SK-N-SH (cell line): ENCODE measurements at regions of chr1 and their contacts with region 1.

Region 1: GRCh38 chr1:145845514-145846161 is at the start of gene NUDT17:
- DNase-seq: peak; percentile 90
- H3K4me3 ChIP-seq: peak within 1 kb of the TSS; percentile 60 to 68
- H3K27ac ChIP-seq: peak within 1 kb of the TSS; percentile 49 to 73; a peak in 3 of 4 replicates
- H3K4me1 ChIP-seq: peaks cover 3 to 14% of the 10 kb centered on the region in 2 experiments; a peak in 2 of 4 replicates
- H3K27me3 ChIP-seq: no peaks in the 10 kb centered on the region
- CTCF ChIP-seq: peak; percentile 97
- EP300 ChIP-seq: 0 out of 4 replicates have a peak, but pooled peaks of 1 of the 2 experiments have one; percentile 26
- RAD21 ChIP-seq: peak; percentile 56
- polyA plus RNA-seq, gene NUDT17: 7.8 and 8.1 TPM in 2 replicates

Region 2: DNA sequence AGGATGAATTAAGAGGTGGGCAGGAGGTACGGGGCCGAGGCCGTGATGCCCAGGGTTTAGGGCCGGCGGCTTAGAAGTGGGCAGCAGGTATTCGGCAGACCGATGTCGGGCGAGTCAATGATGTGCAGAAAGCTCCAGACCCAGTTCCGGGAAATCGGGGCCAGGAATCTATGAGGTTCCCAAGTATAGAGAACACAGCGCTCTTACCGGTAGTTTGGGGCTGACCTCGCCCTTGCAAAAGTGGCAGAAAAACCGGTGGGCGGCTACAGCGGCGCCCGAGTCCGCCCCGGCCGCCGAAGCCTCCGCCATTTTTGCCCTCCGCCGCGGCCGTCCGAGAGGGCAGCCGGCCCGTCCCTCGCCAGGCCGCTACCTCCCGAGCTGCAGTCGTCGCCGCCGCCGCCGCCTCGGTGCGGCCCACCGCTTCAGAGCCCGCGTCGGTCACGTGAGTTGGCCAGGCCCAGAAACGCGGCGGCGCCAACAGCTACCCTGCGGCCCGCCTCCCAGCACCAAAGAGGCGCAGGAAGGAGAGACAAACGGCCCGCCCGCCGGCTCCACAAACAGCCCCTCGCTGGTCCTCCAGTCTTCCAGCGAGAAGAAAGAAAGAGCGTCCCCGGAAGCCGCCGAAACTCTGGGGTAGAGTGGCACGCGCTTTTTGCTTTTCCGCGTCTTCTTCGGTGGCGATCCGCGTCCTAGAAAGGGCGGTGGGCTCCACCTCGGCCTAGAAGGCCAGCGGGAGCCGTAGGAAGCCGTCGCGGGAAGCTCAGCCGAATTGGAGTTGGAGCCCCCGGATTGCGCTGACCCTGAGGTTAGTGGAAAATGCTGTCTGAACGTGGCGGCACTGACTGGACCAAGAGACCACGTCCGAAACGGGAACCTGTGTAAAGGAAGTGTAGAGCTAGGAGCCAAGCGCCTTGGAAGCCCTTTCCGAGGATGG is 21.8 kb before region 1 on chr1 and contains the starts of genes POLR3C and RNF115:
- CTCF ChIA-PET with region 1: interaction called, 121 read pairs
- POLR2A ChIA-PET with region 1: interaction called, 3 read pairs
- DNase-seq: peak; percentile 91
- H3K4me3 ChIP-seq: peak within 1 kb of the TSS; percentile 90 to 99
- H3K27ac ChIP-seq: peak within 1 kb of the TSS; percentile 92 to 98
- H3K4me1 ChIP-seq: peaks cover 0 to 12% of the 10 kb centered on the region in 2 experiments; a peak in 2 of 4 replicates
- H3K27me3 ChIP-seq: no peaks in the 10 kb centered on the region
- CTCF ChIP-seq: no peak
- EP300 ChIP-seq: peak; percentile 24 to 34; a peak in 2 of 4 replicates
- RAD21 ChIP-seq: no peak
- polyA plus RNA-seq, gene POLR3C: 34.1 and 40.9 TPM in 2 replicates
- polyA plus RNA-seq, gene RNF115: 4.8 and 6.1 TPM in 2 replicates

Region 3: DNA sequence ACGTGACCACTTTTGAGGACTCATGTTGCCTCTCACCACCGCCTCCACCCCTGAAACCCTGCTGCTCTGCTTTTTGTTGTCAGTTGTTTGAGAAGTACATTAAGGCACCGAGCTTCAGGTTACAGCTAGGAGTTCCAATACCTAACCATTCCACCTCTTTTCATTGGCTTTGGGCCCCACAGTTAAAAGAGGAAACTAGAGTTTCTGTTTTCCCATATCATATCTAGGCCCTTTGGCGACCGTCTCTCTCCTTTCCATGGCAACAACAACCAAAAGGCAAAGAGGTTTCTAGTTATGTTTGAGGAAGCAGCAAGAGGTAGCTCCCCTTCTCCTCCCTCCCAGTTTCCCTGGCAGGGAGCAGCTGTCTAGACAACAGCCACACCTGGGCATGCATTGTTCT is 34.1 kb after region 1 on chr1:
- CTCF ChIA-PET with region 1: interaction called, 37 read pairs
- POLR2A ChIA-PET with region 1: no interaction called
- DNase-seq: no peak
- H3K4me3 ChIP-seq: no peak overlapping the region
- H3K27ac ChIP-seq: no peak overlapping the region
- H3K4me1 ChIP-seq: peaks cover 0 to 7% of the 10 kb centered on the region in 2 experiments; a peak in 3 of 4 replicates
- H3K27me3 ChIP-seq: no peaks in the 10 kb centered on the region
- CTCF ChIP-seq: no peak
- EP300 ChIP-seq: no peak
- RAD21 ChIP-seq: no peak

Region 4: DNA sequence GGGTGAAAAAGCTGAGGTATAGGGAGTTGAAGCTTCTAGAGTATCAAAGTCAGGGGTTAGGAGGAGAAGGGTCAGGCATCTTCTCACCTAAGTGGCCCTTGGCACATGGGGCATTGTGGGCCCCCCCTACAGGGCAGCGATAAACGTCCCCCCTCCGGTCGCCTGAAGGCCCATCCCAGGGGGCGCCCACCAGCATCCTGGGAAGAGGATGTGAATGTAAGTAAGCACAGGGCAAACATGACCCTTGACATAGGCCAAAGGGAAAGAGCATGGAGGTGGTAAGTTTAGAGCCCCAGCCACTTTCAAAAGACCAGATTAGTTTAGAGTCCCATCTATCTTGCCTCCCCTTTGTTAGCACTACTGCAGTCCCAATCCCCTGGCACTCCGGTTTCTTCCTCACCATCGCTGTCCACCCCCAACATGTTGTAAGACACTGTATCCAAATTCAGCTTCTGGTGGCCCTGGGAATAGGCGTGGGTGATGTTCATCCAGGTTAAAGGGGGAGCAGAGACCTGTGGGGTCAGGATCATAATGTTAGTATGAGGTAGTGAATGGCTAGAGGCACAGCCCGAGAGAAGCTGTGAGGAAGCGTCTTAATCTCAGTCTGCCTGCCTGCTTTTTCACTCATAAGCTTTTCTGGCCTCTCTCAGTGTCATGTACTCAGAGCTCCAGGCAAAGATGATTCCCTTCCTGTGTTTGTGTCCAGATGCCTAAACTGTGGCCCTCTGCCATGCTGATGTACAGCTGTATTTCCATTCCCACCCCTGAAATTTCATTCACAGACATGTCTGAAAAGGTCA is 61.5 kb after region 1 on chr1:
- CTCF ChIA-PET with region 1: interaction called, 25 read pairs
- POLR2A ChIA-PET with region 1: no interaction called
- DNase-seq: no peak
- H3K4me3 ChIP-seq: no peak overlapping the region
- H3K27ac ChIP-seq: no peak overlapping the region
- H3K4me1 ChIP-seq: peaks cover 5 to 8% of the 10 kb centered on the region in 2 experiments; a peak in 2 of 4 replicates
- H3K27me3 ChIP-seq: no peaks in the 10 kb centered on the region
- CTCF ChIP-seq: no peak
- EP300 ChIP-seq: no peak
- RAD21 ChIP-seq: no peak

Region 5: GRCh38 chr1:145978854-145979759 is 133.5 kb after region 1 on chr1:
- CTCF ChIA-PET with region 1: interaction called, 13 read pairs
- POLR2A ChIA-PET with region 1: no interaction called
- DNase-seq: peak; percentile 82
- H3K4me3 ChIP-seq: peak overlapping the region; percentile 18 to 45; a peak in 3 of 4 replicates
- H3K27ac ChIP-seq: peak overlapping the region; percentile 92 to 99
- H3K4me1 ChIP-seq: peaks cover 27 to 30% of the 10 kb centered on the region in 2 experiments
- H3K27me3 ChIP-seq: no peaks in the 10 kb centered on the region
- CTCF ChIP-seq: peak; percentile 48
- EP300 ChIP-seq: peak; percentile 58 to 74; a peak in 2 of 4 replicates
- RAD21 ChIP-seq: no peak

Region 6: DNA sequence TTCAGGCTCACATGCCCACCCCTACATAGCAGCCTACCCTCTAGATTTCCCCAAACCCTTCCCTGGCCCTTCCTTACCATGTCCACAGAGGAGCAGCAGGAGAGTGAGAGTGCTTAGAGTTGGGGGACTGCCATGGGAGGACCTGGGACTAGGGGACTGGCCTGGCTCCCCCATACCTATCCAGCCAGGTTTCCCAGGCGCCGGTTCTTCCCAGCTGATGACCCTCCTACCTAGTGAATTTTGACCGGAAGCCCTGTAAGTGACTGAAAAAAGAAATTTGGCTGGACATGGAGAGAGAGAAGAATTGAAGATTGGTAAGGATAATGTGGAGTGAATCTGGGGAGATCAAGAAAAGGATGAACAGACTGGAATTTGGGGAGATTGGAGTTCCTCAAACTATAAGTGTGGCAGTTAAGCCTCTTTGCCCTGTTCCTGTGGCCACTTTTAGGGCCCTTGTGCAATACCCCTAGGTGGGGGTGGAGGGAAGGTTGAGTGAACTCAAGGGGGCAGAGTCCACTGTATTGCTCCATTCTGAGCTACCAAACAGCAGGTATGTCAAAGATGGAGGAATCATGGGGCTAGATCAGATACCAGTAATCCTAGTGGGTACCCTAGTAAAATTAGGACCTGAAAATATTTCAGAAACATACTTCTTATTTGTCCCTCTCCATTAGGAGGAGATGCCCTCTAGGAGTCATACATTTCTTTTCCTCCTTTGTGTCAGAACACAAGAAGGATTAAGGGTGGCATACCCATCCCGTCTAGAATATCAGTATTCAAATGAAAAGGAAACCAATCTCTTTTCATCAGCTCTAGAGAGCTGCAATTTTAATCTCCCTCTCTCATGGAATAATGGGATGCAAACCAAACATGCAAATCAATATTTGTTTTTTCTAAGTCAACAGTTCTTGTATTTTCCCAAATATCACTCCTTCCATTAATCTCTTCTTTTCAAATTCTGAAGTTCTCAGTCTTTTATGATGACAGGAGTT is 174.7 kb after region 1 on chr1:
- CTCF ChIA-PET with region 1: interaction called, 13 read pairs
- POLR2A ChIA-PET with region 1: no interaction called
- DNase-seq: no peak
- H3K4me3 ChIP-seq: no peak overlapping the region
- H3K27ac ChIP-seq: no peak overlapping the region
- H3K4me1 ChIP-seq: peaks cover 2 to 9% of the 10 kb centered on the region in 2 experiments; a peak in 3 of 4 replicates
- H3K27me3 ChIP-seq: no peaks in the 10 kb centered on the region
- CTCF ChIP-seq: no peak
- EP300 ChIP-seq: no peak
- RAD21 ChIP-seq: no peak